Aorta (tissue), 5 donors: ENCODE measurements at regions of chr4 and their contacts with region 1.

Region 1: DNA sequence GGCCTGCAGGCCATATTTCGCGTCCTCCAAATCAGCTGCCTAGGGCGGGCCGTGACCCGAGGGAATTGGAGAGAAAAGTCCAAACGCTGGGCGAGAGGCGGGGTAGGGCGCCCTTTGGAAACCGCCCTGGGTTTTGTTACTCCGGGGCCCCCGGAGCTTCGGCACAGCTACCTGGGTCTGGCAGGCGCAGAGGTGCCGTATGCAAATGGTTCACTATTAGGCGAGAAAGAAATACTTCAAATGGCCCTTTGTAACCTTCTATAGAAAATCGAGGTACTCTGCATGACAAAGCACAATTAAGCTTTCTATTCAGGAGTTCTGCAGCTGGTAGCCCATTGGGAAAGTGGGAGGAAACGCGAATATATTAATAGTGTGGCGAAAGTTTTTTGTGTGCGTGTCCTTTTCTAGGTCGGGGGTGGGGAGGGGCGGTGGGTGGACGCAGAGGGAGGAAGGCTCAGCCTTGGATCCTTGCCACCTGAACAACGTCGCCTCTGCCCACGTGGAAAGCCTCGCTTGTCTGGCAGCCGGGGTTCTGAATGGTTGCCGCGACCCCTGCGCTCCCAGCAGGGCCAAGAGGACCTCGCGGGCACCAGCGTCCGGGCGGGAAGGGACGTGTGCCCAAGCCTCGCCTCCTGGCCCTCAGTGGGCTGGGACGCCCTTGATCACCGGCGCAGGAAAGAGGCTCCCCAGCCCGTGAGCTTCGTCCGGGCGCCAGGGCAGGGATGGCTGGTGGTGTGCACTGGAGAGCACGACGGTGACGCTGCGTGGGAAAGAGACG is 9.5 kb downstream of the GSX2 start:
- DNase-seq: no peak
- ATAC-seq: peak; percentile 63
- H3K4me3 ChIP-seq: no peak overlapping the region
- H3K27ac ChIP-seq: no peak overlapping the region
- H3K4me1 ChIP-seq: no peaks in the 10 kb centered on the region
- H3K27me3 ChIP-seq: no peaks in the 10 kb centered on the region

Region 2: GRCh38 chr4:54165438-54165837 is 56.0 kb after region 1 on chr4:
- intact Hi-C with region 1: loop called in 1 of 2 experiments (anchors 5 kb)
- DNase-seq: no peak
- ATAC-seq: peak; percentile 66
- H3K4me3 ChIP-seq: no peak overlapping the region
- H3K27ac ChIP-seq: no peak overlapping the region
- H3K4me1 ChIP-seq: no peaks in the 10 kb centered on the region
- H3K27me3 ChIP-seq: no peaks in the 10 kb centered on the region

Region 3: DNA sequence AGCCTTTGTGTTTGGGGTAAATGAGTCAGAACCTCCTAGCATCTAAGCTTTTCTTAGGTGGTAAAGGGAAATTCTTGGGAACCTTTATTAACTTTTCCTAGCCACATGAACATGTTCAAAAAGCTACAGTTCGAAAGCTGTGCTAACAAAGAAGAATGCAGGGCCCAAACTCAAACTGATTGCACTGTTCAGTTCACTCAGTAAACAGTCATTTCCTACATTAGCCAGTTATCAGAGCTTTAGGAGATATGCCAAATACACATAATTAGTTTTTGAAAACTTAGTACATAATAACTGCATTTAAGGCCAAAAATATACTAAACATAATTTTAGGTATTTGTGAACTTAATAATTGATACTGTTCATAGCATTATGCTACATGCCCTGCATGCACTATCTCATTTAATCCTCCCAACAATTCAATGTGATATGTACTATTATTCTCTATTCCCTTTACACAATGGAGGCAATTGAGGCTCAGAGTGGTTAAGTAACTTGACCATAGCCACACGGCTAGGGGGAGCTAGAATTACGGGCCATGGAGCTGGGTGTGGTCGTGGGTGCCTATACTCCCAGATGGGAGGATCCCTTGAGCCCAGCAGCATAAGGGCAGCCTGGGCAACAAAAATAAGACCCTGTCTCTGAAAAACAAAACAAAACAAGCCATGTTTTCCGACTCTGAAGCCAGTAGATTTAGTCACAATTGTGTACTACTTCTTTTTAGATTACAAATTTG is 75.8 kb after region 1 on chr4:
- intact Hi-C with region 1: no loop called
- DNase-seq: no peak
- ATAC-seq: no peak
- H3K4me3 ChIP-seq: no peak overlapping the region
- H3K27ac ChIP-seq: no peak overlapping the region
- H3K4me1 ChIP-seq: no peaks in the 10 kb centered on the region
- H3K27me3 ChIP-seq: no peaks in the 10 kb centered on the region